Aorta (tissue), 5 donors: ENCODE measurements at regions of chr1 and their contacts with region 1.

Region 1: GRCh38 chr1:99877568-99877967 is 27.4 kb downstream of the AGL start:
- DNase-seq: no peak
- ATAC-seq: no peak
- H3K4me3 ChIP-seq: no peak overlapping the region
- H3K27ac ChIP-seq: no peak overlapping the region
- H3K4me1 ChIP-seq: no peaks in the 10 kb centered on the region
- H3K27me3 ChIP-seq: no peaks in the 10 kb centered on the region

Region 2: DNA sequence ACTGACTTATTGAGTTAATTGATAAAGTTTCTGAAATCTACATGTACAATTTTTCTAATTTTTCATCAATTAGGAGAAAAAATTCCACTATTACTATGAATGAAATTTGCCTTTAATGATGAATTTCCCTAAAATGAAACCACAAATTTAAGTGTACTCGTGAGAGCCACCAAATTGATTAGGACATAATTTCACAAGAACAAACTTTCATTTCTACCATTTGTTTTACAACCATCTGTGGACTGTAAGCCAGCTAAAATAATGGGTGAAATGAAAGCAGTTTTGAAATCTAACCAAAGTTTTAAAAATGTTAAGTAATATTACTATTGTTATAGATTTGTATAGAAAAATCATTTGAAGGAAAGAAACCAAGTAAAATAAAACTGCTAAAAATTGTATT is 14.4 kb after region 1 on chr1:
- intact Hi-C with region 1: loop called in 1 of 2 experiments (anchors 1 kb)
- DNase-seq: no peak
- ATAC-seq: no peak
- H3K4me3 ChIP-seq: no peak overlapping the region
- H3K27ac ChIP-seq: no peak overlapping the region
- H3K4me1 ChIP-seq: no peaks in the 10 kb centered on the region
- H3K27me3 ChIP-seq: no peaks in the 10 kb centered on the region

Region 3: GRCh38 chr1:100423832-100424337 is 546.3 kb after region 1 on chr1:
- intact Hi-C with region 1: no loop called
- DNase-seq: no peak
- ATAC-seq: no peak
- H3K4me3 ChIP-seq: no peak overlapping the region
- H3K27ac ChIP-seq: no peak overlapping the region
- H3K4me1 ChIP-seq: no peaks in the 10 kb centered on the region
- H3K27me3 ChIP-seq: no peaks in the 10 kb centered on the region